HCT116 (cell line): ENCODE measurements at regions of chr1 and their contacts with region 1.

Region 1: GRCh38 chr1:13828454-13829151 is 128.6 kb downstream of the PRDM2 start:
- DNase-seq: peak; percentile 43
- ATAC-seq: peak; percentile 99
- H3K4me3 ChIP-seq: peak overlapping the region; percentile 54 to 61
- H3K27ac ChIP-seq: no peak overlapping the region; the same call in 1 of the 2 replicates
- H3K4me1 ChIP-seq: peaks cover 5 to 13% of the 10 kb centered on the region in 2 experiments; a peak in 2 of 4 replicates
- H3K27me3 ChIP-seq: no peaks in the 10 kb centered on the region
- CTCF ChIP-seq: peak; percentile 57 to 93 (median 75)
- POLR2A ChIP-seq: no peak
- RAD21 ChIP-seq: peak; percentile 71

Region 2: GRCh38 chr1:13667691-13668090 is 160.9 kb before region 1 on chr1:
- CTCF ChIA-PET with region 1: no interaction called
- POLR2A ChIA-PET with region 1: no interaction called
- RAD21 ChIA-PET with region 1: no interaction called
- intact Hi-C with region 1: loop called (anchors 5 kb)
- DNase-seq: no peak
- ATAC-seq: no peak
- H3K4me3 ChIP-seq: no peak overlapping the region
- H3K27ac ChIP-seq: no peak overlapping the region
- H3K4me1 ChIP-seq: no peaks in the 10 kb centered on the region
- H3K27me3 ChIP-seq: no peaks in the 10 kb centered on the region
- CTCF ChIP-seq: no peak
- POLR2A ChIP-seq: no peak
- RAD21 ChIP-seq: no peak

Region 3: DNA sequence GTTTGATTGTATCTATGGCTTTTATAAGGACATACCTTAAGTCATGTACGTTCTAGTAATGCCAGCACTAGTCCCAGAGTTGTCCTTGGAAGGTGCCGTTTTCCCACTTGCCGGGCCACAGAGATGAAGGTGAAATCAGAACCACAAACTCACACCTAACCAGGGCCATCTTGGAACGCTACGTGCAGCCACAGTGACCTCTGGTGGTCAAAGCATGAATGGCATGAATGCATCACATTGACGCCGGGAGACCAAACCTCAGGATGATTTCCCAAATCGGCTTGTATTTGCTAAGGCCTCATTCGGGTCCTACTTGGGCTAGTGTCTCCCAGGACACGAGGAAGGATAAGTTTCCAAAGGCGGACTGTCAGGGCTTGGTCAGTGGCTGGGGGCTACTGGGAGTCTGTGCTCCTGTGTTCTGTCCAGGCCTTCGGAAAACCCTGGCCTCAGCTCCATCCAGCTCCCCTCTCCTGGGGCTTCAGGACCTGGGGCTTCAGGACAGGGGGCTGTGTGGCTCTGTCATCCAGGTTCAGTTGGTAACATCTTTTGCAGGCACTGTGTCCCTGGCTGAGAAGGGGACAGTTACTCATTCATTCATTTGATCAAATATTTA is 131.9 kb after region 1 on chr1:
- CTCF ChIA-PET with region 1: interaction called, 11 read pairs
- POLR2A ChIA-PET with region 1: no interaction called
- RAD21 ChIA-PET with region 1: interaction called in 1 of 2 experiments, 4 read pairs
- intact Hi-C with region 1: loop called (anchors 1 kb)
- DNase-seq: peak; percentile 44
- ATAC-seq: peak; percentile 93
- H3K4me3 ChIP-seq: no peak overlapping the region
- H3K27ac ChIP-seq: no peak overlapping the region
- H3K4me1 ChIP-seq: no peaks in the 10 kb centered on the region
- H3K27me3 ChIP-seq: peaks cover 12% of the 10 kb centered on the region; the same call in 1 of the 2 replicates
- CTCF ChIP-seq: peak; percentile 85 to 97 (median 95)
- POLR2A ChIP-seq: no peak
- RAD21 ChIP-seq: peak; percentile 93